CD4-positive, alpha-beta T cell (primary cell): ENCODE measurements at regions of chr1 and their contacts with region 1.

Region 1: DNA sequence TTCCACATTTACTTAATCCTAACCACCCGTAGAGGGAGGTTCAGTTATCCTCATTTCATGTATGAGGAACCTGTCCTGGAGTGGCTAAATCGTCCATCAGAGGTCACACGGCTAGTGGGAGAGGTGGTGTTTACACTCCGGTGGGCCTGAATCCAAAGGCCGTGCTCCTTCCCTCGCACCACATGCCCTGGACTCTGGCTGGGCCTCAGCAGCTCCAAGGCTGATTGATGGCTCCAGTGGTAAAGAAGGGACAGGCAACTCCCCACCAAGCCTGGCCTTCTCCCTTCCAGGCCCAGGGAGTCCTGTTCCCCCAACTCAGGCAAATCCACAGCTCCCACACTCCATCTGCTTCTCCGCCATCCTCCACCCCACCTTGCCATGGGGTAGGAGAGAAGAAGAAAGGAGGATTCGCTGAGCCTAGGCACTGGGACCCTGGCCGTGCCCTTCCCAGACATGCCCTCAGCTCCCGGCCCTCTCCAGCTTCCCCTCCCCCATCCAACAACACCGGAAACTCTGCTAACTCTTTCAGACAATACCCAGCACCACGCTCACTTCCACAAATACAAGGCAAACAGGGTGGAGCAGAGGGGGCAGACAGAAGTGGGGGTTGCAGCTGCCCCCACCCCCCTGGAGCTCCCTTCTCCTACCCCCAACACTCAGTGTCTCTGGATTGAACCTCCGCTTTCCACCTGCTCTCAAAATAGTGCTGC is 10.9 kb downstream of the ARHGEF2 start:
- DNase-seq: peak in 8 of 14 experiments; percentile 26 to 56 (median 42)
- ATAC-seq: peak; percentile 74
- H3K4me3 ChIP-seq: peak overlapping the region; percentile 3
- H3K4me3 Mint-ChIP-seq: peak overlapping the region; percentile 81
- H3K27ac ChIP-seq: peak overlapping the region; percentile 59 to 82
- H3K27ac Mint-ChIP-seq: peak overlapping the region; percentile 86
- H3K4me1 ChIP-seq: peaks cover 81% of the 10 kb centered on the region
- H3K4me1 Mint-ChIP-seq: peaks cover 58% of the 10 kb centered on the region
- H3K27me3 ChIP-seq: no peaks in the 10 kb centered on the region
- H3K27me3 Mint-ChIP-seq: no peaks in the 10 kb centered on the region
- CTCF ChIP-seq: no peak

Region 2: DNA sequence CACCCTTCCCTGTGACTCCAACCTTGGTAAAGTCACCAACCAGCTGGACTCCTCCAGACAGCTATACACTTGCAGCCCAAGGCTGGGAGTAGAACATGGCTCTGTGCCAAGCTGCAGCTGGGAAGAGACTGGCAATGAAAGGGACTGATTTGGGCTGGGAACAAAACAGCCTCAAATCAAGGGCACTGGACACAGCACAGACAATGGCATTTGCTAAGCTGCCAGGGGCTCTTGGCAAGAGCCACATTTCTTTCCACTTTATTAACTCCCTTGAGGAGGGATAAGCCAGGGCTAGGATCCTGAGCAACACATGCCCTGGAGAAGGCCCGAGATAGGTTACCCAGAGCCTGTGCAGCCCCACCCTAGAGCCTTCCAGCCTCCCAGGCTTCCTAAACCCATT is 96.1 kb before region 1 on chr1:
- CTCF ChIA-PET with region 1: no interaction called
- POLR2A ChIA-PET with region 1: no interaction called
- intact Hi-C with region 1: no loop called
- DNase-seq: no peak
- ATAC-seq: no peak
- H3K4me3 ChIP-seq: no peak overlapping the region
- H3K4me3 Mint-ChIP-seq: no peak overlapping the region
- H3K27ac ChIP-seq: no peak overlapping the region
- H3K27ac Mint-ChIP-seq: no peak overlapping the region
- H3K4me1 ChIP-seq: peaks cover 2% of the 10 kb centered on the region
- H3K4me1 Mint-ChIP-seq: no peaks in the 10 kb centered on the region
- H3K27me3 ChIP-seq: no peaks in the 10 kb centered on the region
- H3K27me3 Mint-ChIP-seq: no peaks in the 10 kb centered on the region
- CTCF ChIP-seq: no peak

Region 3: DNA sequence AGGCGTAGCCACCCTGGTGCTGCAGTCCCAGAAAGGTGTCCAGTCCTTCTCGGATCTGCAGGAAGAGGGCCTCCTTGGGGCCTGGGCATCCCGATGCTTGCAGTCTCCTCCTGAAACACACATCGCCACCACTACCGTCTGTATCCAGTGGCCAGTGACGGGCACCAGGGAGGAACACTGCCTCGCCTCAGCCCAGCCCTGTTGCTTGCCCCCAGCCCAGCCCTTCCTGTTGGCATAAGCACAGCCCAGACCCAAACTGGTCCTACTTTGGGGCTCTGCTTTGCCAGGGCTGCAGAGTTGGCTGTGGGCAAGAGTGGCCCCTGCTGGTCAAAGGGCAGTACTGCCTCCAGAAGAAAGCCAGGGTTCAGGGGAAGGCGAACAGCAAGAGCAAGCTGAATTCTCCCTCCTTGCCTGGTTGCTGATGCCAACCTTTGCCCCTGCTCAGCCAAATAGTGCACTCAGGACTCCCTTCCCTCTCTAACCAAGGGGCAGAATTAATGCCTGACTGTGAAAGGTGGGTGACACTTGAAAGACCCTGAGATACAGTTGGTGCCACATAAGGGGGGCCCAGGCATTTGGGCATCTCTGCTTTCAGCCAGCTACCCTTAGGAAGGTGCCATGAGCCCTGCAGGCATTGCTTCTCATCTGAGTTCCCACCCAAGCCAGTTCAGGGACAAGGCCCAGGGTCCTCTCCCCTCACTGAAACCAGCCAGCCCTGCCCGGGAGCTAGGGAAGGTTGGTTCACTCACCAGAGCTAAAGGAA is 21.9 kb after region 1 on chr1:
- CTCF ChIA-PET with region 1: interaction called, 5 read pairs
- POLR2A ChIA-PET with region 1: interaction called, 4 read pairs
- intact Hi-C with region 1: loop called in 1 of 2 experiments (anchors 2 kb)
- DNase-seq: peak; percentile 67 to 89 (median 76)
- ATAC-seq: peak; percentile 100
- H3K4me3 ChIP-seq: no peak overlapping the region
- H3K4me3 Mint-ChIP-seq: no peak overlapping the region
- H3K27ac ChIP-seq: no peak overlapping the region
- H3K27ac Mint-ChIP-seq: no peak overlapping the region
- H3K4me1 ChIP-seq: peaks cover 15% of the 10 kb centered on the region
- H3K4me1 Mint-ChIP-seq: peaks cover 11% of the 10 kb centered on the region
- H3K27me3 ChIP-seq: no peaks in the 10 kb centered on the region
- H3K27me3 Mint-ChIP-seq: no peaks in the 10 kb centered on the region
- CTCF ChIP-seq: peak; percentile 91

Region 4: DNA sequence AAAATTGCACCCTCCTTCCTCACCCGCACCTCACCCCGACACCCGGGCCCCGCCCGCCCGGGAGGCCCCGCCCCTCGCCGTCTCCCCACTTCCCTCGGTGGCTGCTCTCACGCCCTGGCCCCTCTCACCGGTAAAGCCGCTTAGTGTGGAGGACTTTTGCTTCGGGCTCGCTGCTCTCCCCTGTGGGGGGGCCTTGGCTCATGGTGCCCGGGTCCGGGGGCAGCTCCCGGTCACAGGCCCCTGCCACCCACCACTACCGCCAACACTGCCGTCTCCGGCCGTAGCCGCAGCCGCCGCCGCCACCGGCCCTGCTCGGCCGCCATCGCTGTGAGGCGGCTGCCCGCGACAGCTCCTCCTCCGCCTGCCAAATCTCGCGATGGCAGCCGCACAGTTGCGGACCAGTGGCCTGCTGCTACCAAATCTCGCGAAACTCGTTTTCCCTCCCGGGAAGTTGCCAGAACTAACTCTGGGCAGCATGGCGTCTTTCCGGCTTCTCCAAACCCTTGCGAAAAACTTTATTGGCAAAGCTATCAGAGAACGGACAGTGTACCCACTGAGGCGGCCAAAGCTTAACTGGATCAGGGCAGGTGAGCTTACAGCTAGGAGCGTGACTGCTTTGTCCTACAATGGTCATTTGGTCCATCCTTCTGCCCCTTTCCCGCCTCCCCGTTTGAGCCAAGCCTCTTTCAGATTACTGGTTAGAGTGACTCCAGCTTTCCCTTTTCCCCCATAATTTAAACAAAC is 315.2 kb after region 1 on chr1 and contains the start of gene SMG5:
- CTCF ChIA-PET with region 1: no interaction called
- POLR2A ChIA-PET with region 1: no interaction called
- intact Hi-C with region 1: no loop called
- DNase-seq: peak; percentile 90 to 99 (median 94)
- ATAC-seq: peak; percentile 94
- H3K4me3 ChIP-seq: peak within 1 kb of the TSS; percentile 79
- H3K4me3 Mint-ChIP-seq: peak within 1 kb of the TSS; percentile 97
- H3K27ac ChIP-seq: peak within 1 kb of the TSS; percentile 82
- H3K27ac Mint-ChIP-seq: peak within 1 kb of the TSS; percentile 86
- H3K4me1 ChIP-seq: peaks cover 36% of the 10 kb centered on the region
- H3K4me1 Mint-ChIP-seq: peaks cover 47% of the 10 kb centered on the region
- H3K27me3 ChIP-seq: no peaks in the 10 kb centered on the region
- H3K27me3 Mint-ChIP-seq: no peaks in the 10 kb centered on the region
- CTCF ChIP-seq: no peak
- total RNA-seq, gene SMG5: 51.6 to 56.1 TPM